ENCODE measurements at regions of chr13 and their contacts with region 1.

Region 1: GRCh38 chr13:66367356-66367755 is 862.8 kb downstream of the PCDH9 start:
- DNase-seq: no peak
- H3K4me3 ChIP-seq: no peak overlapping the region
- H3K27ac ChIP-seq: no peak overlapping the region
- H3K4me1 ChIP-seq: no peaks in the 10 kb centered on the region
- H3K27me3 ChIP-seq: peaks cover 5% of the 10 kb centered on the region
- CTCF ChIP-seq: no peak
- EP300 ChIP-seq: no peak
- POLR2A ChIP-seq: no peak

Region 2: GRCh38 chr13:66349966-66350365 is 17.4 kb before region 1 on chr13:
- intact Hi-C with region 1: loop called in 1 of 4 experiments (anchors 1 kb)
- DNase-seq: no peak
- H3K4me3 ChIP-seq: no peak overlapping the region
- H3K27ac ChIP-seq: no peak overlapping the region
- H3K4me1 ChIP-seq: peaks cover 7% of the 10 kb centered on the region
- H3K27me3 ChIP-seq: no peaks in the 10 kb centered on the region
- CTCF ChIP-seq: no peak
- EP300 ChIP-seq: no peak
- POLR2A ChIP-seq: no peak

Region 3: GRCh38 chr13:66424422-66424821 is 57.1 kb after region 1 on chr13:
- intact Hi-C with region 1: no loop called
- DNase-seq: no peak
- H3K4me3 ChIP-seq: no peak overlapping the region
- H3K27ac ChIP-seq: no peak overlapping the region
- H3K4me1 ChIP-seq: no peaks in the 10 kb centered on the region
- H3K27me3 ChIP-seq: no peaks in the 10 kb centered on the region
- CTCF ChIP-seq: no peak
- EP300 ChIP-seq: no peak
- POLR2A ChIP-seq: no peak

Measured in ovary (tissue), 10 donors.